Cardiac septum (tissue), 1 donor: ENCODE measurements at regions of chr1 and their contacts with region 1.

Region 1: GRCh38 chr1:27102707-27103491 is 52.0 kb downstream of the SLC9A1 start:
- DNase-seq: peak; percentile 91

Region 2: DNA sequence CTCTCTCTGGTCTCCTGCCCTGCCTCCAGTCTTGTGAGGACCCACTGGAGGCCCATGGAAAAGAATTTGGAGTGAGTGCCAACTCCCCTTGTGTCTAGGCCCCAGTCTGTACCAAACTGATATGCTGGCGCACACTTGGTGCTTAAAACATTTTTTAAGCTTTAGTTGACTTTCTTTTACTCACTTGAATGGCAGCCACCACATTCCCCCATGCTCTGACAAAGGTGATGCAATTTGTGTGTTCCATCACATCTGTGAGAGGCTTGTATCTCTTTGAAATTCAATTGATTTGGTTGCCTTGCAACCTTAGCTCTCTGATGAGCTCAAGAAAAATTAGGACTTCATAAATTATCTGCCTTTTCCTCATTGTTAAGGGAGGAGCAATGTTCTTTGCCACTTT is 101.0 kb after region 1 on chr1:
- intact Hi-C with region 1: loop called (anchors 2 kb)
- DNase-seq: no peak